Heart right ventricle (tissue), 16 donors: ENCODE measurements at regions of chr4 and their contacts with region 1.

Region 1: GRCh38 chr4:73213916-73214653 is 44.5 kb downstream of the ANKRD17 start:
- DNase-seq: no peak
- ATAC-seq: peak in 3 of 8 donors; percentile 30 to 51 (median 44)
- H3K4me3 ChIP-seq: no peak overlapping the region
- H3K27ac ChIP-seq: peak overlapping the region in 3 of 10 donors; percentile 3 to 54 (median 7)
- H3K4me1 ChIP-seq: peaks cover 0 to 48% (median 25%) of the 10 kb centered on the region in 9 donors
- H3K27me3 ChIP-seq: no peaks in the 10 kb centered on the region
- CTCF ChIP-seq: no peak

Region 2: GRCh38 chr4:72935462-72935861 is 278.6 kb before region 1 on chr4:
- intact Hi-C with region 1: no loop called
- DNase-seq: no peak
- ATAC-seq: no peak
- H3K4me3 ChIP-seq: no peak overlapping the region
- H3K27ac ChIP-seq: no peak overlapping the region
- H3K4me1 ChIP-seq: no peaks in the 10 kb centered on the region
- H3K27me3 ChIP-seq: no peaks in the 10 kb centered on the region
- CTCF ChIP-seq: no peak

Region 3: GRCh38 chr4:73178389-73178788 is 35.7 kb before region 1 on chr4:
- intact Hi-C with region 1: loop called in 1 of 10 experiments (anchors 5 kb)
- DNase-seq: no peak
- ATAC-seq: no peak
- H3K4me3 ChIP-seq: no peak overlapping the region
- H3K27ac ChIP-seq: peak overlapping the region in 1 of 10 donors; percentile 5
- H3K4me1 ChIP-seq: peaks cover 0 to 36% (median 22%) of the 10 kb centered on the region in 9 donors
- H3K27me3 ChIP-seq: no peaks in the 10 kb centered on the region
- CTCF ChIP-seq: no peak